ENCODE measurements at regions of chr9 and their contacts with region 1.

Region 1: GRCh38 chr9:98074115-98074990 is 17.8 kb downstream of the NANS start:
- DNase-seq: peak; percentile 68
- H3K4me3 ChIP-seq: no peak overlapping the region
- H3K27ac ChIP-seq: peak overlapping the region; percentile 86 to 97
- H3K4me1 ChIP-seq: peaks cover 14% of the 10 kb centered on the region
- H3K27me3 ChIP-seq: no peaks in the 10 kb centered on the region
- CTCF ChIP-seq: peak; percentile 93 to 97 (median 96)
- POLR2A ChIP-seq: no peak

Region 2: GRCh38 chr9:98192503-98193335 is 118.4 kb after region 1 on chr9 and contains the start of gene CORO2A:
- intact Hi-C with region 1: loop called (anchors 10 kb)
- DNase-seq: peak; percentile 79
- H3K4me3 ChIP-seq: peak within 1 kb of the TSS; percentile 61 to 63
- H3K27ac ChIP-seq: peak within 1 kb of the TSS; percentile 93 to 94
- H3K4me1 ChIP-seq: peaks cover 2% of the 10 kb centered on the region
- H3K27me3 ChIP-seq: no peaks in the 10 kb centered on the region
- CTCF ChIP-seq: peak; percentile 20 to 58 (median 40)
- POLR2A ChIP-seq: peak; percentile 63
- total RNA-seq, gene CORO2A: 31.2 to 45.3 TPM

Region 3: GRCh38 chr9:98263482-98264357 is 189.4 kb after region 1 on chr9:
- intact Hi-C with region 1: loop called (anchors 2 kb)
- DNase-seq: peak; percentile 77
- H3K4me3 ChIP-seq: no peak overlapping the region
- H3K27ac ChIP-seq: no peak overlapping the region
- H3K4me1 ChIP-seq: no peaks in the 10 kb centered on the region
- H3K27me3 ChIP-seq: no peaks in the 10 kb centered on the region
- CTCF ChIP-seq: peak; percentile 59 to 92 (median 78)
- POLR2A ChIP-seq: no peak